ENCODE measurements at regions of chr13 and their contacts with region 1.

Region 1: DNA sequence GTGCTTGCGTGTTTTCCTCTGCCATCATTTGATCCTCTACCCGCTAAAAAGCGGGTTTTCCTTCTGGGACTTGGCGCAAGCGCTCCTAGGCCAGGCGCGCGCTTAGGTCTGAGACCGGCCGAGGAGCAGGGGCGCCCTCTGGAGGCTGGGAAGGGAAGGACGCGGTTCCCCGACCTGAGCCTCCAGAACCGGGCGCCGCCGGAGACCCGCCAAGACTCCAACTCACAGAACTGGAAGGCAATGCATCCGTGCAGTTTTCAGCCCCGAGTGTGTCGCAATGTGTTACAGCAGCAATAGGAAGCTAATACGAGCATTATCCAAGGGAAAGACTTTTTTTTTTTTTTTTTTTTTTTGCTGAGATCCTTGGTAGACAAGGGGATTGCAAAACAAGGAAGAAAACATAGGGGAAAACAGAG is 190.9 kb downstream of the COL4A1 start:
- DNase-seq: no peak
- CTCF ChIP-seq: peak; percentile 64

Region 2: DNA sequence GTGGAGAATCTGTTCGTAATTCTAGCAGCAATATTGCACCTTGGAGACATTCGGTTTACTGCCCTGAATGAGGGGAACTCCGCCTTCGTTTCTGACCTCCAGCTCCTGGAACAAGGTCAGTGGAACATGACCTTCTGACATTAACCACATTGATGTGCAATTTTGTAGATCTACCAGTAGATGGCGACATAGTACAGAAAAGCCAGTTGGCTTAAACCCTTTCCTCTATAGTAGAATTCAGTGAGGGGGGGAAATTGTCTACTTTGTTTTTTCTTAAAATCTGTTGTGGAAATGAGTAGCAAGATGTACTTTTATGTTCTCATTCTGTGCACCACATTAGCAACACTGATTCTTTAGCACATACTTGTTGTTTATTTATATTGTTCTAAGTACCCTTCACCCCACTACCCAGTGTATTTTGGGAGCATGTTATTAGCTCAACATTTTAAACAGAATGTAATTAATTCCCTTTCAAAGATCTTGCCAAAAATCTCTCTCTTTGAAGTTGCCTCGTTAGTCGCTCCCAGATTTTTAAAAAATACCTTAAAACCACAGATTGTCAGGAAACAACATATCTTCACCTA is 1154.4 kb before region 1 on chr13:
- in situ Hi-C with region 1: loop called (anchors 25 kb)
- DNase-seq: peak; percentile 53
- CTCF ChIP-seq: peak; percentile 70